Psoas muscle (tissue), 8 donors: ENCODE measurements at regions of chr12 and their contacts with region 1.

Region 1: GRCh38 chr12:55738123-55739024 is 4.5 kb upstream of the GDF11 start:
- DNase-seq: peak; percentile 72 to 77
- ATAC-seq: peak; percentile 49 to 83 (median 70)
- H3K4me3 ChIP-seq: peak overlapping the region; percentile 64
- H3K27ac ChIP-seq: no peak overlapping the region
- H3K4me1 ChIP-seq: no peaks in the 10 kb centered on the region
- H3K27me3 ChIP-seq: no peaks in the 10 kb centered on the region
- CTCF ChIP-seq: peak; percentile 93

Region 2: GRCh38 chr12:55659486-55660385 is 78.6 kb before region 1 on chr12:
- intact Hi-C with region 1: no loop called
- DNase-seq: no peak
- ATAC-seq: peak; percentile 80 to 89 (median 86)
- H3K4me3 ChIP-seq: no peak overlapping the region
- H3K27ac ChIP-seq: peak overlapping the region; percentile 81
- H3K4me1 ChIP-seq: peaks cover 16% of the 10 kb centered on the region
- H3K27me3 ChIP-seq: no peaks in the 10 kb centered on the region
- CTCF ChIP-seq: peak; percentile 41

Region 3: GRCh38 chr12:55757701-55758100 is 19.3 kb after region 1 on chr12:
- intact Hi-C with region 1: no loop called
- DNase-seq: no peak
- ATAC-seq: no peak
- H3K4me3 ChIP-seq: no peak overlapping the region
- H3K27ac ChIP-seq: no peak overlapping the region
- H3K4me1 ChIP-seq: no peaks in the 10 kb centered on the region
- H3K27me3 ChIP-seq: no peaks in the 10 kb centered on the region
- CTCF ChIP-seq: no peak

Region 4: DNA sequence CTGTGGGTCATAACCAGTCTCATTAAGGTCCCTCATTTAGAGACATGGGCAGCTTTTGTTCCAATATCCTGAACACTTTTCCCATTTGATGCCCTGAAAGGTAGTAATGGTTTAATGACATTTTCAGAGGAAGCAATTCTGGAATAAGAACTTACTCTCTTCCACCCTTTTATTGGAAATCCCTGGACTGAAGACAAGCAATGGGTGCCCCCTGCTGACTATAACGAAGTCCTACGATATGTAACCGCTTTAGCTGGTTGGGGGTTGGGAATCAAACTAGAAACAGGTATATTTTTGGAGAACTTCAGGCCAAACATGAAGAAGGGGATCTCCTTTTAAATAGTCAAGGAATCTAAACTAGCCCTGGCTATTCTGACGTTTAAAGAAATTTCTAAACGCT is 58.7 kb after region 1 on chr12:
- intact Hi-C with region 1: loop called in 1 of 2 experiments (anchors 2 kb)
- DNase-seq: no peak
- ATAC-seq: peak in 1 of 4 donors; percentile 53
- H3K4me3 ChIP-seq: no peak overlapping the region
- H3K27ac ChIP-seq: no peak overlapping the region
- H3K4me1 ChIP-seq: no peaks in the 10 kb centered on the region
- H3K27me3 ChIP-seq: no peaks in the 10 kb centered on the region
- CTCF ChIP-seq: peak; percentile 50

Region 5: GRCh38 chr12:55940065-55940732 is 201.8 kb after region 1 on chr12:
- intact Hi-C with region 1: loop called (anchors 2 kb)
- DNase-seq: peak; percentile 82 to 88
- ATAC-seq: peak; percentile 97 to 99 (median 98)
- H3K4me3 ChIP-seq: peak overlapping the region; percentile 42
- H3K27ac ChIP-seq: no peak overlapping the region
- H3K4me1 ChIP-seq: no peaks in the 10 kb centered on the region
- H3K27me3 ChIP-seq: peaks cover 0 to 5% (median 0%) of the 10 kb centered on the region in 3 donors
- CTCF ChIP-seq: peak; percentile 83

Region 6: DNA sequence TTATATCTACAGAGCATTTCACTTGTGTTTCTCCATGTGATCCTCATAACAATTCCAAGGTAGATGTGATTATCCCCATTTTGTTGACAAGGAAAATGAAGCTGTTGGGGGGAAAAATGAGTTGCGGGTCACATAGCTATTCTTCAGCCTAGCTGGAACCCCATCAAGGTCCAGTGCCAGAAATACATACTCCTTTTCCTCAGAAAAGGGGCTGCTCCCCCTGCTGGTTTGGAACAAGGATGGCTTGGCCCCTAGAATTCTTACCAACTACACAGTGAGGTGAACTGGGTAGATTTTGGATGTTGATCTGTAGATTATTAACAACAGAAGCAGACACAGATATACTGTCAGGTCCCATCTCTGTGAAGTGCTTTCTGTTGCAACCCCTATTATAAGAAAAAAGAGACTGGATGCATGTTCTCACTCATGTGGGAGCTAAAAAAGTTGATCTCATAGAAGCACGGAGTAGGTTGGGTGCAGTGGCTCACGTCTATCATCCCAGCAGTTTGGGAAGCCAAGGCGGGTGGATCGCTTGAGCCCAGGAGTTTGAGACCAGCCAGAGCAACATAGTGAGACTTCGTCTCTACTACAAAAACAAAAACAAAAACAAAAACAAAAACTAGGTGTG is 291.4 kb after region 1 on chr12:
- intact Hi-C with region 1: loop called in 1 of 2 experiments (anchors 5 kb)
- DNase-seq: no peak
- ATAC-seq: peak in 1 of 4 donors; percentile 69
- H3K4me3 ChIP-seq: no peak overlapping the region
- H3K27ac ChIP-seq: no peak overlapping the region
- H3K4me1 ChIP-seq: no peaks in the 10 kb centered on the region
- H3K27me3 ChIP-seq: no peaks in the 10 kb centered on the region
- CTCF ChIP-seq: peak; percentile 50

Region 7: DNA sequence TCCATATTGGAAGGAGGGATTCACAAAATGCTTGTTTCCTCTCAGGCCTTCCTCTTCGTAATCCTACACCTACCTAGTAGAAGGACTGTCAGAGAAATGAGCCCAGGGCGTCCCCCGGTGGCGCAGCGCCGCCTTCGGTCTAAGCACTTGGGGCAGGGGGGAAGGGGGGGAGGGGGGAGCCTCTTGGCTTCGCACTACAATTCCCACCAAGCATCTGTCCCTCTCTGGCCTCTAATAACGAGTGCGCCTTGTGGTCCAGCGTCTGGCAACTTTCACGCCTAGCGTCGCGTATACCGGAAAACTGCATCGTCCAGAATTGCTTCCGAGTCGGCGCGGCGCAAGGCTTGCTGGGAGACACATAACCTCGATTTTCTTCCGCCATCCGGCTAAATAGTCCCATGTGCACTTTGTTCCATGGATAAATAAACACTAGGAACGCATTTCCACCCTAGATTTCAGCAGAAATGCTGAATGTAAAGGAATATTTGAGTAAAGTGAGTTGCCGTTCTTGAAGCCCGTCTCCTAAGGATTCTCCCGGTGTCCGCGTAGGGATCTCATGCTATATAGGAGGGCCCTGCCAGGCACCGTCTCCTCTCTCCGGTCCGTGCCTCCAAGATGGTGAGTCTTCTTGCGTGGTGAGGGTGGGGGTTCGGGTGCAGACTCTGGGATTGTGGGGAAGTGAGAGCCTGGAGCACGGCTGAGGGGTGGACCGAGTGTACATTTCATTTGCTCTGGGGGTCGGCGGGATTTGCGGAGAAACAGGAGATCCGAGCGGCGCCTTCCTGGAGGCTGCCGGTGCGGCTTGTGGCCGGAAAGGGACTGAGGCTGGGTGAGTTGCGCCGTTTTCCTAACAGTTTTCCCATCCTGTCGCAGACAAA is 303.4 kb after region 1 on chr12 and contains the start of gene RPS26:
- intact Hi-C with region 1: no loop called
- DNase-seq: peak; percentile 96 to 99
- ATAC-seq: peak; percentile 94 to 96 (median 96)
- H3K4me3 ChIP-seq: peak within 1 kb of the TSS; percentile 93
- H3K27ac ChIP-seq: peak within 1 kb of the TSS; percentile 99
- H3K4me1 ChIP-seq: peaks cover 17% of the 10 kb centered on the region
- H3K27me3 ChIP-seq: no peaks in the 10 kb centered on the region
- CTCF ChIP-seq: peak; percentile 43
- total RNA-seq, gene RPS26: 16.6 to 49.8 (median 23.6) TPM

Region 8: DNA sequence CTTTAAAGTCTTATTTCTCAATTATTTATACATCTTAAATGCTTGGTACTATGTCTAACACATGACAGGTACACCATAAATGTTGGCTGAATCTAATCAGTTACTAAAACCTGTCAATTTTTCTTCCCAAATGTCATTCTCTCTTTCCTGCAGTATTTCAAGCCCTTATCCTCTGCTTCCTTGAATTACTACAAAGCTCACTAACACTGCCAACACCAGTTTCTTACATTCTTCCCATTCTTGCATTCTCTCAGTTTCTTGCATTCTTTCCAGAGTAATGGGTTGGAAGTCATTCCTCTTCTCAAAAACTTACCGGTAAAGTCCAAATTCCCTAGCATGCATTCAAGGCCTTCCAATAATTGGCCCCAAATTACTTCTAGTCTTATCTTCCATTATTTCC is 460.5 kb after region 1 on chr12:
- intact Hi-C with region 1: no loop called
- DNase-seq: no peak
- ATAC-seq: no peak
- H3K4me3 ChIP-seq: no peak overlapping the region
- H3K27ac ChIP-seq: no peak overlapping the region
- H3K4me1 ChIP-seq: no peaks in the 10 kb centered on the region
- H3K27me3 ChIP-seq: no peaks in the 10 kb centered on the region
- CTCF ChIP-seq: no peak